ENCODE measurements at regions of chr4 and their contacts with region 1.

Region 1: GRCh38 chr4:139761461-139761860 is 95.8 kb downstream of the MGST2 start:
- DNase-seq: no peak
- H3K4me3 ChIP-seq: no peak overlapping the region
- H3K27ac ChIP-seq: no peak overlapping the region
- H3K4me1 ChIP-seq: peaks cover 41% of the 10 kb centered on the region
- H3K27me3 ChIP-seq: no peaks in the 10 kb centered on the region
- CTCF ChIP-seq: peak; percentile 19 to 25
- POLR2A ChIP-seq: no peak

Region 2: GRCh38 chr4:139740531-139741041 is 20.9 kb before region 1 on chr4:
- CTCF ChIA-PET with region 1: interaction called, 16 read pairs
- POLR2A ChIA-PET with region 1: no interaction called
- dilution Hi-C with region 1: no loop called
- intact Hi-C with region 1: loop called (anchors 1 kb)
- DNase-seq: peak; percentile 92
- H3K4me3 ChIP-seq: no peak overlapping the region
- H3K27ac ChIP-seq: peak overlapping the region; percentile 42
- H3K4me1 ChIP-seq: peaks cover 15% of the 10 kb centered on the region
- H3K27me3 ChIP-seq: no peaks in the 10 kb centered on the region
- CTCF ChIP-seq: no peak
- POLR2A ChIP-seq: no peak

Region 3: GRCh38 chr4:139808808-139809756 is 47.6 kb after region 1 on chr4:
- CTCF ChIA-PET with region 1: interaction called, 3 read pairs
- POLR2A ChIA-PET with region 1: no interaction called
- dilution Hi-C with region 1: no loop called
- intact Hi-C with region 1: loop called (anchors 2 kb)
- DNase-seq: peak; percentile 81
- H3K4me3 ChIP-seq: no peak overlapping the region
- H3K27ac ChIP-seq: peak overlapping the region; percentile 18
- H3K4me1 ChIP-seq: peaks cover 9% of the 10 kb centered on the region
- H3K27me3 ChIP-seq: no peaks in the 10 kb centered on the region
- CTCF ChIP-seq: no peak
- POLR2A ChIP-seq: no peak

Region 4: DNA sequence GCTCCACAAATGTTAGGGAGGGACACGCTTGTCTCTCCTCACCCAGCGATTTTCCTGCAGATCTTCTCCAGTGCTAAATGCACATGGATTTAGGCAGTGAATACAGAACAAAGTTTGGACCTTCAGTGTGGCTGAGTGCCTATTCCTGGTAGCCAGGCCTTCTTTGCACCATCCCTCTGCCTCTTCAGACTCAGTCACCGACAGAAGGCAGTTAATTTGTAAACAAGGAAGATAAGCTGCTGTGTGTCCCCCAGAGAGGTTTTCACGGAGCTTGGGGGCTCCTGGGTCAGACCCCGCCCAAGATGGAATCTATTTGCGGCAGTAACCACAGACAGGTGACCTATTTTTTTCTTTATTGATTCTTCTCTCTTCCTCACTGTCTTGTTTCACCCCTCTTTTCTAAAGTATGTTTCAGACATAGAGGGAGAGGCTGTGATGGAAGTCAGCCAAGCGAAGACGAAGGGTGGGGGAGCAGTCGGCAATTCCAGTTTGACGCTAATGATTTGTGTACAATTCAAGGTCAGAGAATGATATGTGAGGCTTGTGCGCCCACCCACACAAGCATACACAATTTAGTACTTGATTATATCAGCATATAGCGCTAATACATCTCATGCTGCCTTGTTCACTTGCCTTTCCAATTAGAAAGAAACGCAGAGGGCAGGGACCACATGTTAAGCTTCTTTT is 105.0 kb after region 1 on chr4:
- CTCF ChIA-PET with region 1: no interaction called
- POLR2A ChIA-PET with region 1: no interaction called
- dilution Hi-C with region 1: no loop called
- intact Hi-C with region 1: loop called (anchors 2 kb)
- DNase-seq: no peak
- H3K4me3 ChIP-seq: no peak overlapping the region
- H3K27ac ChIP-seq: no peak overlapping the region
- H3K4me1 ChIP-seq: peaks cover 8% of the 10 kb centered on the region
- H3K27me3 ChIP-seq: no peaks in the 10 kb centered on the region
- CTCF ChIP-seq: no peak
- POLR2A ChIP-seq: no peak

Region 5: DNA sequence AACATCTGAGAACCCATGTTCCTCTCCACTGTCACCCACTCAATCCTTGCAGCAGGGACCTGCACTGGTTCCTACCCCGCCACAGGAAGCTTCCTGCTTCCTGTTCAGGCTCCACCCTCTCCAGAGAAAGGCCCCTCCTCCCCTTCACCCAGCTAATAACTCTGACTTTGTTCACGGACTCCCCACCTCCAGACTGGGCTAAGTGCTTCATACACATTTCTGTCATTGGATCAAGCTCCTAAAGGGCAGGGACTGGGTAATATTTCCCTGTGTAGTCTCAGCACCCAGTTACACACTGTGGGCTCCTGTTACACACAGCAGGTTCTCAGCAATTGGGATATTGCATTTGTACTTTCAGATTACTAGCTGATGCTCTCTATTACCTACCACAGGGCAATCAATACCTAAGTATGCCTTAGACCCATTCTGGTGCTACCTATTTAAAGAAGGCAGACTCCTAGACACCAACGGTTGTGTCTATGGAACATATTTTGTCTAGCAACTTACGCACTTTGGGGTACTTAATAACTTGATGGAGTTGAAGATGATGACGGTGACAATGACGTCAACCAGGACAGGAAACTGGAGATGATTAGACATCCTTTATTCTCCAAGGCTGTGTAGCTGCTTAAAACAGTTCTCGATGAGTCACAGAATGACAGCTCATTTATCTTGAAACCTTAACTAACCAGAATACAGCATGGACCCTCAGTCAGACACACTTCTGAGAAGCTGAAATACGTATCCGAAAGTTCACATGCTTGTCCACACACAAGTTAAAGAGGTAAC is 334.4 kb after region 1 on chr4:
- CTCF ChIA-PET with region 1: no interaction called
- POLR2A ChIA-PET with region 1: no interaction called
- dilution Hi-C with region 1: no loop called
- intact Hi-C with region 1: loop called (anchors 2 kb)
- DNase-seq: peak; percentile 95
- H3K4me3 ChIP-seq: peak overlapping the region in 1 of 3 experiments; percentile 57
- H3K27ac ChIP-seq: peak overlapping the region; percentile 100
- H3K4me1 ChIP-seq: peaks cover 97% of the 10 kb centered on the region
- H3K27me3 ChIP-seq: no peaks in the 10 kb centered on the region
- CTCF ChIP-seq: no peak
- POLR2A ChIP-seq: peak; percentile 53